Activated naive CD4-positive, alpha-beta T cell treated with anti-CD3 and anti-CD28 coated beads, Interleukin-2, amount 10 ng/mL, durations not matched to agents 7 days and 5 days (primary cell): ENCODE measurements at regions of chr10 and their contacts with region 1.

Region 1: DNA sequence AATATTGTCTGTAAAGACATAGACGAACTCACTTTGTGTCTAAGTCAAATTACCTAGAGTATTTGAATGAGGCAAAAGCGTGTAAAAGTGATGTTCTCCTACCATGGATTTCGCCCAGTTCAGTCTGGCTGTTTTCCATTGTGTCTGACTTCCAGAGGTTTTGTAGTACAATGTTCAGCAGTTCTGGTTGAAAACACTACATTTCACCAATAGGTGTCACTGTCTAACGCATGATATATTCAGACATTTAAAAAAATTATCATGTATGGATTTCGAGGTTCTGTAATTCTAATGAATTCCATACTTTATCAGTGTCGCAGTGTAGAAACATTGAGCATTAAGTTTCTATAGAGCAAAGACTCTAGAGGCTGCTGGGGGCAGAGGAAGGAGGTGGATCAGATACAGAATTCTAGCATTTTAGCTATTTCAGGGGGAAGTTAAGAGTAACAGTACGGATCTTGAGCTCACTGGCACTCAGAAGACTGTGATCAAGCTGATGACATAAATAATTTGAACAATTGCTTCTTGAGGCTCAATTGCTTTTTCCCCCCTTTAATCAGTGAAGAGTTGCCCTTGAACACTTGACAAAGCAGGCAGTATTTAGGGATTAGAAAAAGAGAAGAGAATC is 196.9 kb upstream of the RHOBTB1 start:
- DNase-seq: no peak
- H3K4me3 Mint-ChIP-seq: no peak overlapping the region
- H3K27ac Mint-ChIP-seq: no peak overlapping the region
- H3K4me1 Mint-ChIP-seq: no peaks in the 10 kb centered on the region
- H3K27me3 Mint-ChIP-seq: peaks cover 18% of the 10 kb centered on the region

Region 2: DNA sequence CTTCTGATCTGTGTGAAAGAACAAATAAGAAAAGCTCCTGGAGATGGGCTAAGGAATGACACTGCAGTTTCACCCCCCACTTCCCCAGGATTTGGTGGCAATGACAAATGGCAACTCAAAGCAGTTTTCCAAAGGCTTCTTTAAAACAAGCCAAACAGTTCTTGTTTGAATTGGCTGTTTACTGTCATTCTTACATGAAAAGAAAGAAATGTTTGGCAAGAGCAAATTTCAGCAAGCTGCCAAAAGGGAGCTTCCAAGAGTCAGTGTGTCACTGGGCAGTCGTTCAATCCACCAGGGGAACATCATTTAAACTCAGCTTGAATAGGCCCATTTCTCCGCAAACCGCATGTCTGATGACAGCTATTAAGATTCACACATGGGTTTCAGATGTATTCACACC is 77.8 kb before region 1 on chr10:
- CTCF ChIA-PET with region 1: no interaction called
- DNase-seq: no peak
- H3K4me3 Mint-ChIP-seq: no peak overlapping the region
- H3K27ac Mint-ChIP-seq: no peak overlapping the region
- H3K4me1 Mint-ChIP-seq: no peaks in the 10 kb centered on the region
- H3K27me3 Mint-ChIP-seq: no peaks in the 10 kb centered on the region

Region 3: GRCh38 chr10:61130366-61130765 is 10.5 kb before region 1 on chr10:
- CTCF ChIA-PET with region 1: interaction called, 13 read pairs
- DNase-seq: no peak
- H3K4me3 Mint-ChIP-seq: no peak overlapping the region
- H3K27ac Mint-ChIP-seq: no peak overlapping the region
- H3K4me1 Mint-ChIP-seq: peaks cover 4% of the 10 kb centered on the region
- H3K27me3 Mint-ChIP-seq: no peaks in the 10 kb centered on the region

Region 4: DNA sequence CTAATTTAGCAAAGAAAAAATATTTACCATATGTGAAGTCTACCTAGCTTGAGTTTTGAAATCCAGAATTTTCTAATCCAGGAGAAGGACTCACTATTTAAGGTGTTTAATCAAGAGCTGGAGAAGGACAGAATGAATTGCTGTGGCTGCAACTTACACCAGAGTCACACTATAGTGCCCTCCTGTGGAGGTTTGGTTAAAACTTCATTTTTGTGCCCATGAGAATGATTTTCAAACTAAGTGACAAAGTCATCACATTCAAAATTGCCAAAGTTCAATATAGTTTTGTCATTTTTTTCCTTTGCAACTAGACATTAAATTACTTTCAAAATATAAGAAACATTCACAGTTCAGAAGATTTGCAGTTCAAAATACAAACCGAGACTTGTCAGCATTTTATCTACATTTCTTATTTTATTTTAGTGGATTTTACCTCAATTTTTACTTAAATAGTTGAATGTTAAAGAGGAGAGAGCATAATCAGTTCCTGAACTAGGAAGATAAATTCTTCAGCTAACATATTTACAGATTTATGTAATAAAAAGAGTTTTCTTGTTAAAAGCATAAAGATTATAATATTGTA is 592.6 kb after region 1 on chr10:
- CTCF ChIA-PET with region 1: interaction called, 12 read pairs
- DNase-seq: peak; percentile 22
- H3K4me3 Mint-ChIP-seq: no peak overlapping the region
- H3K27ac Mint-ChIP-seq: no peak overlapping the region
- H3K4me1 Mint-ChIP-seq: no peaks in the 10 kb centered on the region
- H3K27me3 Mint-ChIP-seq: peaks cover 13% of the 10 kb centered on the region